Adrenal gland (tissue), 19 donors: ENCODE measurements at regions of chr3 and their contacts with region 1.

Region 1: DNA sequence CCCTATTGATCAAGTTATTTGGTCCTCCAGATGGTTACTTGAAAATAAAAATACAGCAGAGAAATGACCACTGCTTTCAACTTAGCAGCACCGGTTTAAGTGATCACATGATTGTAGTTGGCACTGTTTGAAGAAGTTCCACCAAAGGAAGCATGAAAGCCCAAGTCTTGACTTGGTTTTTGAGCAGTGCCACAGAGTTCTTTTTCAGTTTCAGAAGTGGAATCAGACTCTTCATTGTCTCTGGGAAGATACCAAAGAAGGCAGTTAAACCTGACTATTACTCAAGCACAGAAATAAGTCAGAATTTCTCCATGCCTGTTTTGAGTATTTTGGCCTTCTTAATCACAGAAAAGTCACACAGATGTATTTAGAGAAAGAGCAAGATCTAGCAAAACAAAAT is 66.7 kb downstream of the BBX start:
- DNase-seq: no peak
- H3K4me3 ChIP-seq: no peak overlapping the region
- H3K27ac ChIP-seq: no peak overlapping the region
- H3K4me1 ChIP-seq: peaks cover 7 to 43% of the 10 kb centered on the region in 2 donors
- H3K27me3 ChIP-seq: no peaks in the 10 kb centered on the region
- CTCF ChIP-seq: no peak
- POLR2A ChIP-seq: no peak

Region 2: GRCh38 chr3:106728315-106729098 is 860.9 kb before region 1 on chr3:
- intact Hi-C with region 1: no loop called
- DNase-seq: peak in 2 of 7 donors; percentile 1 to 14
- H3K4me3 ChIP-seq: no peak overlapping the region
- H3K27ac ChIP-seq: peak overlapping the region in 1 of 5 donors; percentile 23
- H3K4me1 ChIP-seq: no peaks in the 10 kb centered on the region
- H3K27me3 ChIP-seq: no peaks in the 10 kb centered on the region
- CTCF ChIP-seq: no peak
- POLR2A ChIP-seq: no peak

Region 3: DNA sequence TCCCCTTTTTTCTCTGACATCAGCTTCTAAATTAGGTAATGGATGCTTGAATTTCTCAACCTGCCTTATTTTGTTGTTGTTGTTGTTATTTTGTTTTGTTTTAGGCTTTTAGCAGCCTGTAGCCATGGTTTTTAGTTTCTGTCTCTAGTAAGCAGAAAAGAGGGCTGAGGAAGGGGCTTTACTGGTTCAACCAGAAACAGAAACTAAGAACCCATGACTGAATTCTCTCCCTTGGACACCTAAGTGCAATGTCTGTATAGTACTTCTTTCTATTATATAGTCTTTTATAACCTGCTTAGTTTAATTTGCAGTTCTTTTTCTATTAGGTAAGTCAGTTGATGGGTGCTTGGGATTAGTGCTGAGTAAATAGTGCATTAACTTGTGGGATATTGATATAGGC is 62.3 kb after region 1 on chr3:
- intact Hi-C with region 1: loop called in 1 of 2 experiments (anchors 10 kb)
- DNase-seq: no peak
- H3K4me3 ChIP-seq: no peak overlapping the region
- H3K27ac ChIP-seq: no peak overlapping the region
- H3K4me1 ChIP-seq: peaks cover 0 to 6% of the 10 kb centered on the region in 2 donors
- H3K27me3 ChIP-seq: no peaks in the 10 kb centered on the region
- CTCF ChIP-seq: no peak
- POLR2A ChIP-seq: no peak

Region 4: DNA sequence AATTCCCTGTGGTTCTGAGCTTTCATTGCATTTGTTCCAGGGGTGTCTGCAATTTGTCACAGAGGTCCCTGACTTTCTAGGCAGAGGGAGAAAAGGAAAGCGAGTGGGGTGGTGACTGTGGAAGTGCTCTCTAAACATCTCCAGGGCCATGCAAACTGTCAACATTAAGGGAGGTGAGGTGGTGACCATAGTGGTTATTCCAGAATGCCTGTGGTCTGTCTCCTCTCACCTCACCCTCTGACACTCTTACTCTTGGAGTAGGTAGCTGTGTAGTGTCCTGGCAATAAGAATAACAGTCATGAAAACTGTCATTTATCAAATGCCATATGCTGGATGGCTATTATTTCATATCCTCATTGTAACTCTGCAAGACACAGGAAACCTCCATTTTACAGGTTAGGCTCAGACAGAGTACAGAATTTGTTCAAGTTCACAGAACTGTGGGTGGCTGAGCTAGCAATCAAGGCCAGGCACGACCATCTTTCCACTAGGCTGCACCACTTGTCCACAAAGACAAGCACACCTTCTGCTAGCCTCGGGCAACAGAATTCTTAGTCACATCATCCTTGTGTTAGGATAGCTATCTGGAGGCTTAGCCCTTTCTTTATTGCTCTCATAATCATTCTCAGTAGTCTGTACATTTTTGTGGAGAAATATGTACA is 322.0 kb after region 1 on chr3:
- intact Hi-C with region 1: no loop called
- DNase-seq: no peak
- H3K4me3 ChIP-seq: no peak overlapping the region
- H3K27ac ChIP-seq: no peak overlapping the region
- H3K4me1 ChIP-seq: peaks cover 0 to 14% of the 10 kb centered on the region in 2 donors
- H3K27me3 ChIP-seq: no peaks in the 10 kb centered on the region
- CTCF ChIP-seq: no peak
- POLR2A ChIP-seq: no peak